ENCODE measurements at regions of chr15 and their contacts with region 1.

Region 1: DNA sequence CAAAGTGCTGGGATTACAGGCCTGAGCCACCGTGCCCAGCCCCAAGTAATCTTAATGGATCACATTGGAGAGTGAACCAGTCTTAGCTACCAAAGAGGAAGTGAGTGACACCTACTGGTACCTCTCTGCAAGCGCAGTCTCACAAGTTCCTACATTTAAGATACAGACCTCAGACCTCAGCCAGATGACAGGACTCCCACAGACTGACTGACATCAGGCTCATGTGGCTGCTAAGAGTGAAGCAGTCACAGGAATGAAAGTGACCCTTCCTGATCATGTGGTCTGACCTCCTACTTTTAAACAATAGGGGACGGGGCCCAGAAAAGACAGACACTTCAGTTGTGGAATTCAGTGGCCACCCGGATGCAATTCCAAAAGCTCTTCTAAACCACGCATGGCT is 36.3 kb upstream of the GNB5 start:
- DNase-seq: peak; percentile 82
- ATAC-seq: peak; percentile 95
- H3K4me3 Mint-ChIP-seq: no peak overlapping the region
- H3K27ac Mint-ChIP-seq: no peak overlapping the region
- H3K4me1 Mint-ChIP-seq: peaks cover 13% of the 10 kb centered on the region
- H3K27me3 Mint-ChIP-seq: no peaks in the 10 kb centered on the region

Region 2: GRCh38 chr15:51888593-51889195 is 338.8 kb before region 1 on chr15:
- CTCF ChIA-PET with region 1: no interaction called
- POLR2A ChIA-PET with region 1: no interaction called
- intact Hi-C with region 1: no loop called
- DNase-seq: no peak
- ATAC-seq: no peak
- H3K4me3 Mint-ChIP-seq: no peak overlapping the region
- H3K27ac Mint-ChIP-seq: no peak overlapping the region
- H3K4me1 Mint-ChIP-seq: peaks cover 7% of the 10 kb centered on the region
- H3K27me3 Mint-ChIP-seq: no peaks in the 10 kb centered on the region

Region 3: GRCh38 chr15:51935466-51936104 is 291.9 kb before region 1 on chr15:
- CTCF ChIA-PET with region 1: no interaction called
- POLR2A ChIA-PET with region 1: no interaction called
- intact Hi-C with region 1: no loop called
- DNase-seq: no peak
- ATAC-seq: peak; percentile 66
- H3K4me3 Mint-ChIP-seq: no peak overlapping the region
- H3K27ac Mint-ChIP-seq: peak overlapping the region; percentile 48
- H3K4me1 Mint-ChIP-seq: peaks cover 2% of the 10 kb centered on the region
- H3K27me3 Mint-ChIP-seq: no peaks in the 10 kb centered on the region

Region 4: DNA sequence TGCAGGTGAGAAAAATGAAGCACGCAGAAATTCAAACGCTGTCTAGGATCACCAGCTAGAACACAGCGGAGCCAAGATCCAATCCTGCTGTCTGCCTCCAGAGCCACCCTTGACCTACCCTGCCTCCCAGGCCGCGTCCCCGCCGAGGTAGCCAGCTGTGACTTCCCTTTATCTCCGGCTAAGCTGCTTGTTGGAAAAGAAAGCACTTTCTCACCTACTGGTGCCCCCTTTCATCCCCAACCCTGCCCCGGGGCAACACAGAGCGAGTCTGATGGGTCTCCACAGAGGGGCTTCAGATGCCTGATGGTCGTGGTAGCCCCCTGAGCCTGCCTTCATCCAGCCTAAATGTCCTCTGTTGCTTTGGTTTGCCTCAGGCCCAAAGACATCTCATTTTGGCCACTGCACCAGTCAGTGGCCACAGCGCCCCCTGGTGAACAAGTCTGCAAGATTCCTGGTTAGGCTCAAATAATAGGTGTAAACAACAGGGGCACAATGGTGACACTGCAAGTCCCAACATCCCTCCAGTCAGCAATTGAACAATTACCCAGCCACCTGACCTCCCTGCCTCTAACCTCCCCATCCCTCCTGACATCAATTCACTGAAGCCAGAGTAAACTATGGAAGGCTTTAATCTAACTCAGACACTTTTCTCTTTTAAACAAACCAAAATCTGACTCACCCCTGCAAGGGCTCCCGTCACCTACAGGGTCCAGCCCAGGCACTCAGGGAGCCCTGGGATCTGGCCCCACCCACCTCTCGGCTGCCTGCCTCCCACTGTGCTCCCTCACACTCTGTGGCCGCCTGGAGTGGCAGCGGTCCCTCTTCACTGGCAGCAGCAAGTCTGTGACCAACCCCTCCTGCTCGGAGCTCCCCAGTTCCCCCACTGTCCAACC is 87.6 kb before region 1 on chr15:
- CTCF ChIA-PET with region 1: interaction called, 15 read pairs
- POLR2A ChIA-PET with region 1: no interaction called
- intact Hi-C with region 1: no loop called
- DNase-seq: peak; percentile 86
- ATAC-seq: peak; percentile 68
- H3K4me3 Mint-ChIP-seq: no peak overlapping the region
- H3K27ac Mint-ChIP-seq: no peak overlapping the region
- H3K4me1 Mint-ChIP-seq: peaks cover 19% of the 10 kb centered on the region
- H3K27me3 Mint-ChIP-seq: no peaks in the 10 kb centered on the region

Region 5: GRCh38 chr15:52208306-52208946 is 19.0 kb before region 1 on chr15:
- CTCF ChIA-PET with region 1: interaction called, 48 read pairs
- POLR2A ChIA-PET with region 1: no interaction called
- intact Hi-C with region 1: no loop called
- DNase-seq: peak; percentile 88
- ATAC-seq: peak; percentile 99
- H3K4me3 Mint-ChIP-seq: no peak overlapping the region
- H3K27ac Mint-ChIP-seq: no peak overlapping the region
- H3K4me1 Mint-ChIP-seq: no peaks in the 10 kb centered on the region
- H3K27me3 Mint-ChIP-seq: no peaks in the 10 kb centered on the region

Region 6: GRCh38 chr15:52217186-52217585 is 10.3 kb before region 1 on chr15:
- CTCF ChIA-PET with region 1: interaction called, 48 read pairs
- POLR2A ChIA-PET with region 1: interaction called, 6 read pairs
- intact Hi-C with region 1: no loop called
- DNase-seq: peak; percentile 59
- ATAC-seq: peak; percentile 61
- H3K4me3 Mint-ChIP-seq: no peak overlapping the region
- H3K27ac Mint-ChIP-seq: no peak overlapping the region
- H3K4me1 Mint-ChIP-seq: peaks cover 14% of the 10 kb centered on the region
- H3K27me3 Mint-ChIP-seq: no peaks in the 10 kb centered on the region

Region 7: DNA sequence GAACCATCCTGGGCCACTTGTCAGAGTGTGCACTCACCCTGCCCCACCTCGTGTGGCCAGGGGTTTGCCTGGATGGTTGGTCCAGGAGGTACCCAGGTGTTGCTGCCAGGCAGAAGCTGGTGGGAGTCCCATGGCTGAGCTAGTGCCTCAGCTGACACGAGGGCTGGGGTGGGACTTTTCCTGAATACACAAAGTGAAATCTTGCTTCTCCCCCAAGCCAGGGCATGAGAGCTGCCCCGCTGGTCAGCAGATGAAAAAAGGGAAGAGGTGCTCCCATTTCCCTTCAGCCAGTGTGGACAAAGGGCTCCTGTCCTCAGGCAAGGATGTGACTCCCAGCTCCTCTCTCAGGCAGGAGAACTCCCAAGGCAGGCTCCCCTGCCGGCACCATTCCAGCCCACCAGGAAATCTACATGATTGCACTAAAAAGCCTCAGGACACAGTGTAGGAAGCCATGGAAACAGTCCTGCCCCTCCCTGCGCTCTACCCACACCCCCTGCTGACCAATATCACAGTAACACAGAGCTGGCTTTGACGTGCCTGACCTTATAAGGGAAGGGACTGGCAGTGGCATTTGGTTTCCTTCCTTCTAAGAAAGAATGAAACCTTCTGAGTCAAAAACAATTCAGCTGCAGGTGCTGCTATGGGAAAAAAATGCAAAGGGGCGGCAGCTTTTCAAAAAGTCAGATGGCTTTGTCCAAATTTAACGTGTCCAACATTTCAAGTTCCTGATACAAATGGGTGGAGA is 34.2 kb after region 1 on chr15:
- CTCF ChIA-PET with region 1: interaction called, 12 read pairs
- POLR2A ChIA-PET with region 1: no interaction called
- intact Hi-C with region 1: no loop called
- DNase-seq: peak; percentile 83
- ATAC-seq: peak; percentile 100
- H3K4me3 Mint-ChIP-seq: no peak overlapping the region
- H3K27ac Mint-ChIP-seq: peak overlapping the region; percentile 84
- H3K4me1 Mint-ChIP-seq: peaks cover 31% of the 10 kb centered on the region
- H3K27me3 Mint-ChIP-seq: no peaks in the 10 kb centered on the region

Region 8: GRCh38 chr15:52910518-52910917 is 683.1 kb after region 1 on chr15:
- CTCF ChIA-PET with region 1: no interaction called
- POLR2A ChIA-PET with region 1: no interaction called
- intact Hi-C with region 1: no loop called
- DNase-seq: no peak
- ATAC-seq: no peak
- H3K4me3 Mint-ChIP-seq: no peak overlapping the region
- H3K27ac Mint-ChIP-seq: no peak overlapping the region
- H3K4me1 Mint-ChIP-seq: no peaks in the 10 kb centered on the region
- H3K27me3 Mint-ChIP-seq: peaks cover 9% of the 10 kb centered on the region

Measured in activated CD4-positive, alpha-beta T cell treated with anti-CD3 and anti-CD28 coated beads for 36 hours (primary cell).